ENCODE measurements at regions of chr3 and their contacts with region 1.

Region 1: DNA sequence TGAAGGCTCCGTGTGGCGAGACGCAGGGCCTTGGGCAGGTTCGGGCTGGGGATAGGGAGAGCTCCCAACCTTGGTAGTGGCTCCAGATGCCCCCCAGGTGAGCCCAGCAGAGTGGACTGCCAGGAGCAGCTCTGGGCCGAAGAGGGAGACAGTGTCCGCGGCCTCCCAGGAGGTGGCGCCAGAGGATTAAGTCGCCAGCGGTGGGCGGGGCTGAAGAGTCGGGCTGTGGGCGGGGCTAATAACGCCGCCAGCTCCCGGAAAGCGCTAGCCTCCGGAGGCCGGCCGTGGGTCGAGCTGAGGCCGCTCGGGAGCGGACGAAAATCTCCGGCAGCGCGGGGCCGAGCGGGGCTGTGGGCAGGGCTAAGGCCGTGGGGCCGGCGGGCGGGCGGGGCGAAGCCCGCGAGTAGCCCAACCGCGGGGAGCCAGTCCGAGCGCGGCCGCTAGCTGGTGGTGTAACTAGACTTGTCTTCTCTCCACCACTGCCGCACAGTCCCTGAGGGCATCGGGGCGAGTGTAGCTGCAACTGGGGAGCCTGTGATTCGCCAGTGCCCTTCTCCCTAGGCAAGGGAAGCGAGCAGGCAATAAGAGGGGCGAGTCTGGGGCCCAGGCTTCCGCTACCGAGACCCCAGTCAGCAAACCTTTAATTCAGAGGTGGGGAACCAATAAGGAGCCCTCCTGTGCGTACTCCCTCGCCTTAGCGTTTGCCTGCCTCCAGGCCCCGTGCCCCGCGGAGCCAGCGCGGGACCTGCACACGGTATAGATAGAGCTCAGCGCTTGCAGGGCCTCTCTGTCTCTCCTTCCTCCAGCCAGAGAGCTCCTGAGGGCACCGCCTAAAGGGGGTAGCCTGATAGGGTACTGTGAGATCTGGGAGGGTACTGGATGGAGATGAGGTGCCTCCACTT is 14.4 kb upstream of the BSN start:
- DNase-seq: peak; percentile 95
- H3K4me3 ChIP-seq: peak overlapping the region; percentile 32 to 50 (median 36)
- H3K27ac ChIP-seq: peak overlapping the region; percentile 75 to 89 (median 82)
- H3K4me1 ChIP-seq: peaks cover 0 to 13% (median 9%) of the 10 kb centered on the region in 4 donors
- H3K27me3 ChIP-seq: peaks cover 3% of the 10 kb centered on the region
- CTCF ChIP-seq: peak; percentile 76 to 93 (median 88)
- EP300 ChIP-seq: no peak
- POLR2A ChIP-seq: no peak

Region 2: DNA sequence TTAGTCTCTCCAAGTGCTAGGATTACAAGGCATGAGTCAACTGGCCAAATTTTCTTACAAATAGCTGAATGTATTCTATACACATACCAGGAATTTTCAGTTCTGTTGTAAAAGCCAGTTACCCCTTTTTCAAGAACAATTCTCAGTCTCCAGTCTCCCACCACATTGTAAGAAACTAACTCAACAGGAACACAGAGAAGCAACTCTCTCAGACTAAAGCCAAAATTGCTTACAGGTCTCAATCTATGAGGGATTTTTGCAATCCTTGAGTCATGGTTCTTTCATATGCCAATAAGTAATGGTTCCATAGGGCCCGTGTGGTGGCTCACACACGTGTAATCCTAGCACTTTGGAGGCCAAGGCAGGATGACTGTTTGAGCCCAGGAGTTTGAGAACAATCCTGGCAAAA is 831.4 kb before region 1 on chr3:
- in situ Hi-C with region 1: no loop called
- intact Hi-C with region 1: no loop called
- DNase-seq: no peak
- H3K4me3 ChIP-seq: no peak overlapping the region
- H3K27ac ChIP-seq: peak overlapping the region in 1 of 4 donors; percentile 24
- H3K4me1 ChIP-seq: peaks cover 15 to 75% (median 32%) of the 10 kb centered on the region in 4 donors
- H3K27me3 ChIP-seq: no peaks in the 10 kb centered on the region
- CTCF ChIP-seq: no peak
- EP300 ChIP-seq: no peak
- POLR2A ChIP-seq: no peak

Region 3: DNA sequence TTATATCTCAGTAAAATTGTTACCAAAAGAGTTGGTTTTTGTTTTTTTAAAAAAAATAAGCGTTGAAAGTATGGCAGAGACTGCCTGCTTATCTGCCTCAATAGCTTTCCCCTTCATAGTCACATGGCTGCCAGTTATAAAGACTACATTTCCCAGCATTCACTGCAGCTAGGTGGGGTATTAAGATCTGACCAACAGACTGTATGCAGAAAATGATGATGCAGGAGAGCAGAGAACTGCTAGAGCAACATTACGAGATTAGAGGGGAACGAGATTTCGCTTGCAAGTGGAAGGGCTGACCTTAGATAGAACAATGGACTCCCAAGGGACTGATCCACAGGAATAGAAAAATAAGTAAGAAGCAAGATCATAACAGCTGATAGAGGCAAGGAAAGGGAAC is 142.4 kb before region 1 on chr3:
- in situ Hi-C with region 1: no loop called
- intact Hi-C with region 1: no loop called
- DNase-seq: no peak
- H3K4me3 ChIP-seq: no peak overlapping the region
- H3K27ac ChIP-seq: peak overlapping the region in 1 of 4 donors; percentile 24
- H3K4me1 ChIP-seq: peaks cover 7 to 56% (median 10%) of the 10 kb centered on the region in 4 donors
- H3K27me3 ChIP-seq: no peaks in the 10 kb centered on the region
- CTCF ChIP-seq: no peak
- EP300 ChIP-seq: no peak
- POLR2A ChIP-seq: no peak

Region 4: DNA sequence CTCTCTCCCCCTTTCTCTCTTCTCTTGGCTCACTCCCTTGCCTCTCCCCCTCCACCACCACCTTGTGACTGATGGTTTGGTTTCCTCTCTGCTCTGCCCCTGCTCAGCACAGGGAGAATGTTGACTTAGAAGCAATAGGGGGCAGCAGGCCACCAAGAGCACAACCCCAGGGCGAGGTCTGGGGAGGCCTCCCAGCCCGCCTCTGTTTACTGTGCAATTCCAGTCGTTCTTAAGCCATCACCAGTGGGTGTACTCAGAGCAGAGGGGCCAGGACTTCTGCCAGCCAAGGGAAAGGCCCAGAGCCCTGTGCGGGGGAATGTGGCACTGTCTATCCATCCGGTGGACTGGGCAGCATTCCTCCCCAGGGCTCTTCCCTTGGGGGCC is 128.5 kb after region 1 on chr3:
- in situ Hi-C with region 1: loop called (anchors 5 to 10 kb)
- intact Hi-C with region 1: loop called (anchors 5 kb)
- DNase-seq: no peak
- H3K4me3 ChIP-seq: no peak overlapping the region
- H3K27ac ChIP-seq: no peak overlapping the region
- H3K4me1 ChIP-seq: peaks cover 0 to 4% (median 4%) of the 10 kb centered on the region in 4 donors
- H3K27me3 ChIP-seq: peaks cover 16% of the 10 kb centered on the region
- CTCF ChIP-seq: no peak
- EP300 ChIP-seq: no peak
- POLR2A ChIP-seq: no peak

Region 5: DNA sequence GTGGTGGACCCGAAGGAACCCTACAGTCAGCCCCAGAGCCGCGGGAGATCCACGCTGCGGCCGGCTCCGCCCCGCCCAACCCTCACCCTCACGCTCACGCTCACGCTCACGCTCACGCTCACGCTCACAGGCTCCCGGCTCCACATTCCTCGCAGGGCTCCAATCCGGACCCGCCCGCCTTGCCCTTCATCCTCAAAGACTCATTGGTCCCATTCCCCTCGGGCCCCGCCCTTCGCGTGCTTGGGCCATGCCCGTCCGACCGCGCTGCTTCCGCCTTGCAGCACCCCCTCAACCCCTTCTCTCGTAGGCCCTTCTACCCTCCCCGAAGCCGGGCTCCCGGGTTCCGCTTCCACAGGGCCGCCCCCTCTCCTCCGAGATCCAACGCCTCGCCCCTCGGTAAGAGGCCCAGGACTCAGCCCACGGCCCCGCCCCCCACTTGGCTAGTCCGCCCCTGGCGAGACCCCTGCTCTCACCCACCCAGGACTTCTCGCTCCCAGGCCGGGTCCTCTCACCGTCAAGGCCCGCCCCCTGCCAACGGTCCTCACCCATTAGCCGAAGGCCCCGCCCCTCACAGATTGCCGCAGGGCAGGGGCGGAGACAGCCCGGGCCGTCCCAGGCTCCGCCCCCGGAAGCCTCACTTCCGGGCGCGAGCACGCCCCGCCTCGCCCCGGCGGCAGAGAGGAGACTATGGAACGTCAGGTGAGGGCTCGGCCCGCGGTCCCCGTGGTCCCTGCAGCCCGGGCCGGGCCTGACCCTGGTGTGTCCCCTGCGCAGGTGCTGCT is 134.0 kb after region 1 on chr3 and contains the start of gene APEH:
- in situ Hi-C with region 1: loop called (anchors 5 to 10 kb)
- intact Hi-C with region 1: loop called (anchors 5 kb)
- DNase-seq: peak; percentile 98
- H3K4me3 ChIP-seq: peak within 1 kb of the TSS; percentile 60 to 90 (median 88)
- H3K27ac ChIP-seq: peak within 1 kb of the TSS; percentile 91 to 96 (median 92)
- H3K4me1 ChIP-seq: peaks cover 9 to 16% (median 12%) of the 10 kb centered on the region in 4 donors
- H3K27me3 ChIP-seq: no peaks in the 10 kb centered on the region
- CTCF ChIP-seq: peak in 1 of 5 experiments; percentile 23
- EP300 ChIP-seq: no peak
- POLR2A ChIP-seq: peak; percentile 93
- total RNA-seq, gene APEH: 53.9 to 151 (median 116) TPM